Naive thymus-derived CD4-positive, alpha-beta T cell (primary cell): ENCODE measurements at regions of chr21 and their contacts with region 1.

Region 1: DNA sequence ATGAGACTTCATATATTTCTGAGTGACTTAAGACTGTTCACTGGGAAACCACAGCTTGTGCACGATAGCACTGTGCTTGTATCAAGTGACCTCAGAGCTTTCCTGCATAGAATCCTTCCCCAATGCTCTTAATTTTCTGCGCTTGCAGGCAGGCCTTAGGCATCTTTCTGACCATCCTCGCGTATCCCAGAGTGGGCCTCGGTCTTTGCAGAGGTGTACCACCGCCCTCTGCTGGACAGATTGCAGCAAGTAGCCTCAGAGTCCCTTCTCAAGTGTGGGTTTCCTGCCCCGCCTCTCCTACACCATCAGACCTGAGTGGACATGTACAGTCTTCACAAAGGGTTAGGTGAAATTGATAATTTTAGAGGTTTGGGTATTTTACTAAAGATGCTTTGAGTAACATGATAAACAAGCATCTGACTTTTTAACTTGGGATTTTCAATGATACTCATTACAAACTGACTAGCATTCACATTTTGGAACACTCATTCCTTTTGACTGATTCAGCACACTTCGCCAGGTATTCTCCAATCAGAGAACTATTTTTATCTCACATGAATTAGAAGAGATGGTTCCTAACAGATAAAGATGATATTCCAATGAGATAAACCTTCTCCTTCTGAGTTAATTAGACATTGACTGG is 246.5 kb upstream of the USP25 start:
- DNase-seq: peak; percentile 33 to 75 (median 69)
- ATAC-seq: peak; percentile 99
- H3K4me3 ChIP-seq: no peak overlapping the region
- H3K4me3 Mint-ChIP-seq: peak overlapping the region in 6 of 10 donors; percentile 18 to 59 (median 37)
- H3K27ac ChIP-seq: no peak overlapping the region
- H3K27ac Mint-ChIP-seq: peak overlapping the region in 2 of 9 donors; percentile 2 to 57
- H3K4me1 ChIP-seq: no peaks in the 10 kb centered on the region
- H3K4me1 Mint-ChIP-seq: peaks cover 3 to 37% (median 25%) of the 10 kb centered on the region in 7 donors
- H3K27me3 ChIP-seq: no peaks in the 10 kb centered on the region
- H3K27me3 Mint-ChIP-seq: peaks cover 0 to 3% (median 0%) of the 10 kb centered on the region in 5 donors

Region 2: DNA sequence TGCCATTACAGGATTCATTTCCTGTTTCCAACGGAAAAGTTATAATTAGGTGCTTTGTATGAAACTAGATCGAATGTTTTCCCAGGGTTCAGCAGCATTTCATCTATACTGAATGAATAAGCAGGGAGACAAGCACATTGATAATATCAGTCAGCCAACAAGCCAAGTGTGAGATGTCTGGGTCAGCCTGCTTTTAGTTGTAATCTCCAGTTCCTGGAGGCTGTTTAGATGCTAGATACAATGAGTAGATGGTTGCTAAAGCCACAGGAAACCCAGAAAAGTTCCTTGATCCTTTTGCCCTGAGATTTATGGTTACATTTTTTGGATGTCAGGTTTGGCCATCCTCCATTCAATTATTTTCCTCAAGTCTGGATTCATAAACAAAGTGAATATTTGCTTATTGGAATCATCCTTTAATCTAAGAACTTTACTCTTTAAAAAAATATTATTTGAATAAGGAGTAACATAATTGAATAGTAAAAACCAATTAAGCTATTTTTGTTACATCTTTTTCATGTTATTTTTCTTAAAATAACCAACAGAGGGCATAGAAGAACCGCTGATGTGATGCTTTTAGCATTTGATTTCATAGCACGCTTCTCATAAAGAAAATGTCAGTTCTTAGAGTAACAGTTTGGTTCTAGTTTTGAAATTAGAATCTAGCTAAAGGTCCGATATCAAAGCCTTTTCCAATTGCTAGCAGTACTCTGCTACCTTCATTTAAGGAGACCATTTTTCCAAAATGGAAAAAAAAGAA is 1176.9 kb before region 1 on chr21:
- CTCF ChIA-PET with region 1: interaction called, 3 read pairs
- POLR2A ChIA-PET with region 1: no interaction called
- intact Hi-C with region 1: loop called in 1 of 2 experiments (anchors 1 kb)
- DNase-seq: peak in 1 of 9 donors; percentile 4
- ATAC-seq: no peak
- H3K4me3 ChIP-seq: no peak overlapping the region
- H3K4me3 Mint-ChIP-seq: no peak overlapping the region
- H3K27ac ChIP-seq: no peak overlapping the region
- H3K27ac Mint-ChIP-seq: no peak overlapping the region
- H3K4me1 ChIP-seq: no peaks in the 10 kb centered on the region
- H3K4me1 Mint-ChIP-seq: peaks cover 0 to 2% (median 0%) of the 10 kb centered on the region in 7 donors
- H3K27me3 ChIP-seq: no peaks in the 10 kb centered on the region
- H3K27me3 Mint-ChIP-seq: peaks cover 7 to 19% (median 12%) of the 10 kb centered on the region in 5 donors

Region 3: DNA sequence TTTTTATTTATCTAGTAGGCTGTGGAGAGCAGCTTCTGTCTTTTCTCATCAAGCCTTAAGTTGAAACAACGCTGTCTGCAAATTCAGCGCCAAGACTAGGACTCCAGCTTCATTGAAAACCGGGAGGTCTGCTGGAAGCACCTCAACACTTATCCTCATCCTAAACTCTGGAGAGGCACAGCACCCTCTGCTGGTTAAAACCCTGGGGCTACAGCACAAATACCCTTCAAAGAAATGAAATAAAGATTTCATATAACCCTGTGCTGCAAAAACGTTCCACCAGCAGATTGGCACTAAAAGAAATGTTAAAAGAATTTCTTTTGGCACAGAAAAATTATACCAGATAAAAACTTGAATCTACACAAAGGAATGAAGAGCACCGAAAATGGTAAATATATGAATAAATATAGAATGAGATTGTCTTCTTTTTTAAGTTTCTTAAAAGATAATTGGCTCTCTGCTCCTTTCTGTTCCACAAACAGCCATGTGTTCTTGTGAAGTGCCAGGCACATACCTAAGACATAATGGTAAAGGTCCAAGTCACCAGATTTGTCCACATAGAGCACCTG is 709.4 kb before region 1 on chr21:
- CTCF ChIA-PET with region 1: no interaction called
- POLR2A ChIA-PET with region 1: no interaction called
- intact Hi-C with region 1: loop called (anchors 2 to 5 kb)
- DNase-seq: peak in 8 of 9 donors; percentile 8 to 57 (median 37)
- ATAC-seq: peak; percentile 74
- H3K4me3 ChIP-seq: no peak overlapping the region
- H3K4me3 Mint-ChIP-seq: no peak overlapping the region
- H3K27ac ChIP-seq: no peak overlapping the region
- H3K27ac Mint-ChIP-seq: no peak overlapping the region
- H3K4me1 ChIP-seq: no peaks in the 10 kb centered on the region
- H3K4me1 Mint-ChIP-seq: peaks cover 0 to 6% (median 0%) of the 10 kb centered on the region in 7 donors
- H3K27me3 ChIP-seq: peaks cover 0 to 3% of the 10 kb centered on the region in 2 donors
- H3K27me3 Mint-ChIP-seq: peaks cover 0 to 11% (median 0%) of the 10 kb centered on the region in 5 donors

Region 4: GRCh38 chr21:15005391-15005790 is 477.9 kb before region 1 on chr21:
- CTCF ChIA-PET with region 1: no interaction called
- POLR2A ChIA-PET with region 1: no interaction called
- intact Hi-C with region 1: loop called in 1 of 2 experiments (anchors 5 kb)
- DNase-seq: peak in 8 of 9 donors; percentile 12 to 62 (median 53)
- ATAC-seq: peak; percentile 81
- H3K4me3 ChIP-seq: peak overlapping the region; percentile 56
- H3K4me3 Mint-ChIP-seq: peak overlapping the region; percentile 64 to 88 (median 80)
- H3K27ac ChIP-seq: peak overlapping the region; percentile 24
- H3K27ac Mint-ChIP-seq: peak overlapping the region; percentile 66 to 93 (median 80)
- H3K4me1 ChIP-seq: peaks cover 0 to 28% of the 10 kb centered on the region in 2 donors
- H3K4me1 Mint-ChIP-seq: peaks cover 36 to 67% (median 60%) of the 10 kb centered on the region in 7 donors
- H3K27me3 ChIP-seq: no peaks in the 10 kb centered on the region
- H3K27me3 Mint-ChIP-seq: no peaks in the 10 kb centered on the region

Region 5: GRCh38 chr21:15172992-15173626 is 310.1 kb before region 1 on chr21:
- CTCF ChIA-PET with region 1: no interaction called
- POLR2A ChIA-PET with region 1: no interaction called
- intact Hi-C with region 1: no loop called
- DNase-seq: no peak
- ATAC-seq: no peak
- H3K4me3 ChIP-seq: no peak overlapping the region
- H3K4me3 Mint-ChIP-seq: no peak overlapping the region
- H3K27ac ChIP-seq: no peak overlapping the region
- H3K27ac Mint-ChIP-seq: no peak overlapping the region
- H3K4me1 ChIP-seq: no peaks in the 10 kb centered on the region
- H3K4me1 Mint-ChIP-seq: peaks cover 0 to 18% (median 10%) of the 10 kb centered on the region in 7 donors
- H3K27me3 ChIP-seq: no peaks in the 10 kb centered on the region
- H3K27me3 Mint-ChIP-seq: no peaks in the 10 kb centered on the region

Region 6: GRCh38 chr21:15592271-15592860 is 109.1 kb after region 1 on chr21:
- CTCF ChIA-PET with region 1: no interaction called
- POLR2A ChIA-PET with region 1: no interaction called
- intact Hi-C with region 1: loop called (anchors 2 to 5 kb)
- DNase-seq: peak in 5 of 9 donors; percentile 23 to 41 (median 29)
- ATAC-seq: peak; percentile 68
- H3K4me3 ChIP-seq: no peak overlapping the region
- H3K4me3 Mint-ChIP-seq: no peak overlapping the region
- H3K27ac ChIP-seq: no peak overlapping the region
- H3K27ac Mint-ChIP-seq: no peak overlapping the region
- H3K4me1 ChIP-seq: no peaks in the 10 kb centered on the region
- H3K4me1 Mint-ChIP-seq: no peaks in the 10 kb centered on the region
- H3K27me3 ChIP-seq: no peaks in the 10 kb centered on the region
- H3K27me3 Mint-ChIP-seq: peaks cover 0 to 20% (median 5%) of the 10 kb centered on the region in 5 donors

Region 7: GRCh38 chr21:16667395-16667794 is 1184.1 kb after region 1 on chr21:
- CTCF ChIA-PET with region 1: no interaction called
- POLR2A ChIA-PET with region 1: no interaction called
- intact Hi-C with region 1: no loop called
- DNase-seq: no peak
- ATAC-seq: no peak
- H3K4me3 ChIP-seq: no peak overlapping the region
- H3K4me3 Mint-ChIP-seq: no peak overlapping the region
- H3K27ac ChIP-seq: no peak overlapping the region
- H3K27ac Mint-ChIP-seq: no peak overlapping the region
- H3K4me1 ChIP-seq: no peaks in the 10 kb centered on the region
- H3K4me1 Mint-ChIP-seq: no peaks in the 10 kb centered on the region
- H3K27me3 ChIP-seq: no peaks in the 10 kb centered on the region
- H3K27me3 Mint-ChIP-seq: no peaks in the 10 kb centered on the region